Activated T-helper 2 cell treated with anti-CD3 and anti-CD28 coated beads, Interferon-gamma antibody, Interleukin-2, Interleukin-4, amounts not matched to agents 10 μg/mL and 5 μg/mL and 100 μg/mL, durations not matched to agents 14 hours and 24 hours and 36 hours (primary cell): ENCODE measurements at regions of chr10 and their contacts with region 1.

Region 1: DNA sequence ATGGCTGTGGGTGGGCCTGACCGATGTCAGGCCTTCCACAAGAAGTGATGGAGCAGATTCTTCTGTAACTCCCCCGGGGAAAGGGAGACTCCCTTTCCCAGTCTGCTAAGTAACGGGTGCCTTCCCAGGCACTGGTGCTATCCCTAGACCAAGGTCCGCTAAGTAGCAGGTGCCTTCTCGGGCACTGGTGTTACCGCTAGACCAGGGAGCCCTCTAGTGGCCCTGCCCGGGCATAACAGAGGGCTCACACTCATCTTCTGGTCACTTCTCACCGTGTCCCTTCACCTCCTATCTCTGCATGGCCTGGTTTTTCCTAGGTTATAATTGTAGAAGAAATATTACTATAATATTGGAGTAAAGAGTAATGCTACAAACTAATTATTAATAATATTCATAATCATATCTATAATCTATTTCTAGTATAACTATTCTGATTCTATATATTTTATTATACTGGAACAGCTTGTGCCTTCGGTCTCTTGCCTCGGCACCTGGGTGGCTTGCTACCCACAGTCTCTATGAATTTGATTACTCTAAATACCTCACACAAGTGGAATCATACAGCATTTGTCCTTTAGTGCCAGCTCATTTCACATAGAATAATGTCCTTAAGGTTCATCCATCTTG is 1378.7 kb downstream of the XPNPEP1 start:
- DNase-seq: peak; percentile 9
- H3K4me3 Mint-ChIP-seq: no peak overlapping the region
- H3K27ac Mint-ChIP-seq: no peak overlapping the region
- H3K4me1 Mint-ChIP-seq: no peaks in the 10 kb centered on the region
- H3K27me3 Mint-ChIP-seq: no peaks in the 10 kb centered on the region

Region 2: GRCh38 chr10:106625751-106626150 is 1918.9 kb before region 1 on chr10:
- intact Hi-C with region 1: loop called (anchors 10 kb)
- DNase-seq: no peak
- H3K4me3 Mint-ChIP-seq: no peak overlapping the region
- H3K27ac Mint-ChIP-seq: no peak overlapping the region
- H3K4me1 Mint-ChIP-seq: no peaks in the 10 kb centered on the region
- H3K27me3 Mint-ChIP-seq: no peaks in the 10 kb centered on the region

Region 3: DNA sequence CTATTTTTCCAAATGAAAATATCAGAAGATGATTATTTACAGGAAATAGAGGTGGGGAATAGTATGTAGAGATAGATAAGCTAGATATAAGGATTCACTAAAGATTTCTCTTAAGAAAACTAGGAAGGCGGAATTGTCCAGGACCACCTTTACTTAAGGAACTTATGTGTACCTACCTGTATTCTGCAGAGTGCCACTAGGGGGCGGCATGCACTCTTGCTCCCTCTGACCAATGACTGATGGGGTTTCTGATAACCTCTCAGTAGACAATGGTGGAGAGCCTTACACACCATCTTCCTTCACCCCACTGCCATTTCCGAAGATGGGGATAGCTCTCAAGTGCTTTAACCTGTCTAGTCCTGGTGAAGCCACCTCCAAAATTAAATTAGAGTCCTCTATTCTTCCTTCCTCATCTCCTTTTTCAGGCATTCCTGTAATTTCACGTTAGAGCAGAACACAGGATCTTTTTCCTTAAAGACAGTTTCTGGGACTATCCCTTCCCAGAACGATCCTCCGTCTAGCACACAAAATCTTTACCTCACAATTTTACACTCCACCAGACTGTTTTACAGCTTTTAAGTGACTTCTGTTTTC is 1833.2 kb before region 1 on chr10:
- intact Hi-C with region 1: loop called (anchors 5 kb)
- DNase-seq: peak; percentile 11
- H3K4me3 Mint-ChIP-seq: no peak overlapping the region
- H3K27ac Mint-ChIP-seq: no peak overlapping the region
- H3K4me1 Mint-ChIP-seq: no peaks in the 10 kb centered on the region
- H3K27me3 Mint-ChIP-seq: no peaks in the 10 kb centered on the region

Region 4: DNA sequence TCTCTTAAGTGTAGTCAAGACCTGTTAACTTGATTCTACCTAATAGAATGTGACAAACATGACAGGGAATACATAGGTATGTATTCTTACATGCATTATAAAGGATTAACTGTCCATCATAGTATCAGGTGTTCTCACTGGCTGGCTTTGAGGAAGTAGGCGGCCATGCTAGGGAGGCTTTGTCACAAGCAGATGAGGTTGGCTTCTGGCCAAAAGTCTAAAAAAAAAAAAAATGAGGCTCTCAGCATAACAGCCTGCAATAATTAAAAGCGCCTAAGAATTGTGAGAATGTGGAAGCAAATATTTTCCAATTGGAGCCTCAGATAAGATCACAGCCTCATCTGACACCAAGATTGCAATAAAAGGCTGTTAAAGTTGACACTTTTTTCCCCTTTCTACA is 123.3 kb before region 1 on chr10:
- intact Hi-C with region 1: no loop called
- DNase-seq: no peak
- H3K4me3 Mint-ChIP-seq: no peak overlapping the region
- H3K27ac Mint-ChIP-seq: no peak overlapping the region
- H3K4me1 Mint-ChIP-seq: no peaks in the 10 kb centered on the region
- H3K27me3 Mint-ChIP-seq: no peaks in the 10 kb centered on the region

Region 5: GRCh38 chr10:108877095-108877561 is 332.5 kb after region 1 on chr10:
- intact Hi-C with region 1: no loop called
- DNase-seq: no peak
- H3K4me3 Mint-ChIP-seq: no peak overlapping the region
- H3K27ac Mint-ChIP-seq: no peak overlapping the region
- H3K4me1 Mint-ChIP-seq: no peaks in the 10 kb centered on the region
- H3K27me3 Mint-ChIP-seq: no peaks in the 10 kb centered on the region